ENCODE measurements at regions of chr13 and their contacts with region 1.

Region 1: GRCh38 chr13:95987841-95988240 is 65.4 kb downstream of the UGGT2 start:
- DNase-seq: no peak
- ATAC-seq: no peak
- H3K4me3 ChIP-seq: no peak overlapping the region
- H3K27ac ChIP-seq: no peak overlapping the region
- H3K4me1 ChIP-seq: no peaks in the 10 kb centered on the region
- H3K27me3 ChIP-seq: no peaks in the 10 kb centered on the region
- CTCF ChIP-seq: no peak
- EP300 ChIP-seq: no peak
- POLR2A ChIP-seq: no peak
- RAD21 ChIP-seq: no peak

Region 2: GRCh38 chr13:95968906-95969305 is 18.9 kb before region 1 on chr13:
- CTCF ChIA-PET with region 1: interaction called, 29 read pairs
- POLR2A ChIA-PET with region 1: no interaction called
- RAD21 ChIA-PET with region 1: no interaction called
- SMC1A ChIA-PET with region 1: interaction called, 10 read pairs
- in situ Hi-C with region 1: no loop called
- intact Hi-C with region 1: no loop called
- DNase-seq: no peak
- ATAC-seq: no peak
- H3K4me3 ChIP-seq: no peak overlapping the region
- H3K27ac ChIP-seq: no peak overlapping the region
- H3K4me1 ChIP-seq: no peaks in the 10 kb centered on the region
- H3K27me3 ChIP-seq: no peaks in the 10 kb centered on the region
- CTCF ChIP-seq: no peak
- EP300 ChIP-seq: no peak
- POLR2A ChIP-seq: no peak
- RAD21 ChIP-seq: no peak